ENCODE measurements at regions of chr7 and their contacts with region 1.

Region 1: DNA sequence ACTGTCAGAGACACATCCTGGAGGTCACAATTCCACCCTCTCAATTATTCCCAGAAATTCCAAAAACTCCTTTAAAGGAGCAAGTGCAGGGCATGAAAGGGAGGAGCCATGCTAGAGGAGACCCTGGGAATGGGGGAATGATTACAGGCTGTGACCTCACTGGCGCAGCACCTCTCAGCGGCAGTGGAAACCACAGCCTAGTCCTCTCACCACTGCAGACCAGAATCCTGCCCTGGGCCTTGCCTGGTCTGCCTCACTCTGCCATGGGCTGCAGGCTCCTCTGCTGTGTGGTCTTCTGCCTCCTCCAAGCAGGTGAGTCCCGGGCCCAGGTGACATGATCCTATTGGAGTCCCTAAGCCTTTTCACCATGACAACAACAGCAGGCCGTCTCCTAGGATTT is 50.5 kb upstream of the PRSS58 start:
- DNase-seq: no peak
- ATAC-seq: no peak
- H3K4me3 ChIP-seq: no peak overlapping the region
- H3K27ac ChIP-seq: no peak overlapping the region
- H3K4me1 ChIP-seq: no peaks in the 10 kb centered on the region
- H3K27me3 ChIP-seq: no peaks in the 10 kb centered on the region
- CTCF ChIP-seq: no peak

Region 2: DNA sequence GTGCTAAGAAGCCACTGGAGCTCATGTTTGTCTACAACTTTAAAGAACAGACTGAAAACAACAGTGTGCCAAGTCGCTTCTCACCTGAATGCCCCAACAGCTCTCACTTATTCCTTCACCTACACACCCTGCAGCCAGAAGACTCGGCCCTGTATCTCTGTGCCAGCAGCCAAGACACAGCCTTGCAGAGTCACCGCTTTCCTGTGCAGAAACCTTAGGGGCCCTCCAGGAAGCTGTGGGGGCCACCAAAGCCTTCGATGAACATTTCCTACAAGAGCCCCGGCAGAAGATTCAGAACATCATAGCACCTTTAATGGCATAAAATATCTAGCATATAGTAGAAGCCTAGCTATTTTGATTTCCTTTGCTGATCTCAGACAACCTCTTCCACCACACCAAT is 37.5 kb after region 1 on chr7:
- intact Hi-C with region 1: loop called (anchors 2 kb)
- DNase-seq: no peak
- ATAC-seq: no peak
- H3K4me3 ChIP-seq: no peak overlapping the region
- H3K27ac ChIP-seq: no peak overlapping the region
- H3K4me1 ChIP-seq: no peaks in the 10 kb centered on the region
- H3K27me3 ChIP-seq: no peaks in the 10 kb centered on the region
- CTCF ChIP-seq: no peak

Measured in psoas muscle (tissue), 8 donors.